ENCODE measurements at regions of chr5 and their contacts with region 1.

Region 1: DNA sequence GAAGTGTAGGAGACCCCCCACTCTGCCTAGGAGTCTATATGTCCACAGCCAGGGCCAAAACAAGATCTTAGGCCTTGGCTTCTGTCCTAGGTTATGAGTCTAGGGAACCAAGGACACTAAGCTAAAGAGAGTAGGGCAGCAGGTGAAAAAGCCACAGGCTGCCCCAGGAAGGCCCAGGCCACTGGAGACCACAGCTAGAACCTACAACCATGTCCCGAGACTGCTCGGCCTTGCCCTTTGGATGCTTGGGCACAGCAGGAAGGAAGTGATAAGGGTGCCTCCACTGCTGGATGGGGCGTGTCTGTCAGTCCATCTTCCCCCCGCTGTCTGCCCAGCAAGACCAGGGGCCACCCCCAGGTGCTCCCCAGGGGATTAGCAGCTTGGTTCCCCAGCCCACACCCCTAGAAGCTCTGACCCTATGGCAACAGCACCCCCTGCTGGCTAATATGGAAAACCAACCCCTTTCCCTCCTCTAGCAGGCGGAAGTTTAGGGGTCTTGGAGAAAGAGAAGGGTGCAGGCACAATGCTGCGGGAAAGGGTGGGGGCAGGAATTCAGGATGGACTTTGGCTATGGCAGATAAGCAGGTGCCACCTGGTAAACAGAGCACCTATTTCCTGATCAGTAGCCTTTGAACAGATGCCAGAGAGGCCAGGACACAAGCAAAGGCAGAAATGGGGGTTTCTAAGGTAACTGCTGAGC is 10.5 kb upstream of the IRF1 start:
- DNase-seq: peak; percentile 65 to 76 (median 67)
- ATAC-seq: peak; percentile 28 to 48 (median 28)
- H3K4me3 ChIP-seq: no peak overlapping the region
- H3K27ac ChIP-seq: peak overlapping the region; percentile 49 to 81 (median 64)
- H3K4me1 ChIP-seq: peaks cover 0 to 58% (median 34%) of the 10 kb centered on the region in 4 donors
- H3K27me3 ChIP-seq: no peaks in the 10 kb centered on the region
- CTCF ChIP-seq: peak; percentile 70 to 88 (median 75)
- POLR2A ChIP-seq: no peak

Region 2: DNA sequence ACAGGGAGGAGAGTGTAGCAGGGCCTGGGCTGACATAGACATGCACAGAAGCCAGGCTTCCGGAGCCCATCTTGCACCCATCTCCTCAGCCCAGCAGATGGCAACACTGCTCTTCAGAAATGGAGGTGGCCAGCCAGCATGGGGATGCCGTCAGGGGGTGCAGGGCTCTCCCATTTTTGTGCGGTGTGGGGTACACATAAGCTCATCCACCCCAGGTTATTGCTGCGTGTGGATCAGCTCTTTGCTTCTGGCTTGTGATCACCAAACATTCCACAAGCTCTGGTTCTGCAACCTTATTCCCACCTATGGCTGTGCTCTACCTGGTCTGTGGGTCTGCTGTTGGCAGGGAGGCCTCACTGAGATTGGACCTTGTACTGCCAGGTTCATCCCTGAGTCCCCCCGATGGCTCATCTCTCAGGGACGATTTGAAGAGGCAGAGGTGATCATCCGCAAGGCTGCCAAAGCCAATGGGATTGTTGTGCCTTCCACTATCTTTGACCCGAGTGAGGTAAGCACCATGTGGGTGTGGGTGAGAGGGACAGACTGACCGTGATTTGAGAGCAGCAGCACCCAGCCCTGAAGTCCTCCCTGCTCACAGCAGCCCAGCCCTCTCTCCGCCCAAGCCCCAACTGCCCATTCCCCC is 114.3 kb before region 1 on chr5:
- intact Hi-C with region 1: loop called (anchors 5 to 10 kb)
- DNase-seq: peak; percentile 78 to 82 (median 82)
- ATAC-seq: peak; percentile 78 to 88 (median 88)
- H3K4me3 ChIP-seq: no peak overlapping the region
- H3K27ac ChIP-seq: peak overlapping the region; percentile 61 to 81 (median 78)
- H3K4me1 ChIP-seq: peaks cover 0 to 37% (median 7%) of the 10 kb centered on the region in 4 donors
- H3K27me3 ChIP-seq: no peaks in the 10 kb centered on the region
- CTCF ChIP-seq: peak; percentile 83 to 95 (median 86)
- POLR2A ChIP-seq: no peak

Region 3: DNA sequence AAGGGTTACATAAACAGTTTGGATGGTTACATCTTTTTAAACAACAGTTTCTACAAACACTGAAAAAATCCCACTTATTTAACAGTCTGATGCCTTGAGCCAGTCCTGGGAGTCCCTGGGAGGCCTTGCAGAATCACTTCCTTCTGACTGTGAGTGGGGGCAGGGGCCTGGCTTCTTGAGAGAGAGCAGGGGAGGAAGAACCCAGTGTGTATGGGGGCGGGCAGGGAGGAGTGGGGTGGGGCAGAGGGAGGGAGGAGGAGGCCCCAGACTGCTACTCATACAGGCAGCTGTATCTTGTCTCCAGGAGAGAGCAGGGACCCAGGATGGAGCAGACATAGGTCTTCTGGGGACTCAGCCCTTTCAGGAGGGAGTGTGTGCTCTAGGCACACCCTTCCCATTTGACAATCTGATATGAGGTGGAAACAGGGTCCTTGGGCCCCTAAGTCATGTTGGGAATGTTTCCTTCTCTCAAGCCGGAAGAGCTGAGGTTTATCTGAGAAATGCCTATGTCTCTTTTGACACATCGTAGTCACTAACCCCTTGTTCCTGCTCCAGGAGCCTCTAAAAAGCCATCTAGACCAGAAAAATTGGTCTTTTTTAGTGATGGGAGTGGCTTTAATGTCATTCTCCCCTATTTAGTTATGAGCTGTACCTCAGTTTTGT is 63.3 kb before region 1 on chr5:
- intact Hi-C with region 1: no loop called
- DNase-seq: peak; percentile 70 to 75 (median 71)
- ATAC-seq: peak; percentile 50 to 80 (median 70)
- H3K4me3 ChIP-seq: no peak overlapping the region
- H3K27ac ChIP-seq: peak overlapping the region in 2 of 3 donors; percentile 34 to 53
- H3K4me1 ChIP-seq: peaks cover 0 to 32% (median 6%) of the 10 kb centered on the region in 4 donors
- H3K27me3 ChIP-seq: no peaks in the 10 kb centered on the region
- CTCF ChIP-seq: no peak
- POLR2A ChIP-seq: no peak